ENCODE measurements at regions of chr7 and their contacts with region 1.

Region 1: DNA sequence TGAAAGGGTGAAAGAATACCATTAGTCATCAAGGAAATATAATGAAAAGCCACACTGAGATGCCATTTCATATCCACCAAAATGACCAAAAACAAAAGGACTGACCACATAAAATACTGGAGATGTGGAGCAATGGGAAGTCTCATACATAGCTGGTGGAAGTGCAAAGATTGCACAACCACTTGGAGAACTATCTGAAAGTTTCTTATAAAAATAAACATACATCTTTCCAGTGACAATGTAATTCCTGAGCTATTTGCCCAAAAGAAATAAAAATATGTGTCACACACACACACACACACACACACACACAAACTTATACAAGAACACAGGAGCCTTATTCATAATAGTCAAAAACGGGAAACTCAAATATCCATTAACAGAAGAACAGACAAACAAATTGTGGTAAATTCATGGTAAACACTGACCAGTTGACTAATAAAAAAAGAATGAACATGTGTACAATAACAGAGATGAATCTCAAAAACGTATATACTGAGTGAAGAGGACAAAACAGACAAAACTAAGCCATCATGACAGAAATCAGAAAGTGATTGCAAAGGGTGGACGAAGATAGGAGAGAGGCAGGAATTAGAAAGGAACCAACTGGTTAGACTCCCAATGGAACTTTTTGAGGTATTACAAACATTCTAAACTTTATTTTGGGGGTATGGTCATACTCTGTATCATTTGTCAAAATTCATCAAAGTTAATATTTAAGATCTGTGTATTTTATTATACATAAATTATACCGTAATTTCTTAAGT is 21.5 kb downstream of the WASL start:
- DNase-seq: peak; percentile 53
- ATAC-seq: peak; percentile 58
- H3K4me3 ChIP-seq: no peak overlapping the region
- H3K27ac ChIP-seq: peak overlapping the region; percentile 45
- H3K4me1 ChIP-seq: peaks cover 75% of the 10 kb centered on the region
- H3K27me3 ChIP-seq: no peaks in the 10 kb centered on the region
- CTCF ChIP-seq: no peak
- EP300 ChIP-seq: no peak; a peak in 1 of 4 replicates
- POLR2A ChIP-seq: no peak
- RAD21 ChIP-seq: no peak

Region 2: DNA sequence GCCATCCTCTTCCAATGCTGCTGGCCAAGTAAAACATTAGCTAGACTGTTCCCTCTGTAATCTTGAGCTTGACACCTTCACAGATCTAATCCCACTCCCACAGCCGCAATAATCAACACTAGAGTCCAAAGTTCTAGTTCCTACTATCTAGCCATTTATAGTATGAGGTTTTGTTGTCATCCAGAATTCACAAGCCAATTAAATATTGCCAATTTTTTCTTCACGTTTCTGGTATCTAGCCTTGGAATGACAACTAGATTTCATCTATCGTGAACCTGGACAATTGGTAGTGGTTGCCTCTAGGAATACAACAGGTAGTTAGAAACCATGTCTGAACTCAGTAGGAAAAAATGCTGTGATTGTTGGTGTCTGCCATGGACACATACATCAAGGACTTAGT is 11.1 kb after region 1 on chr7:
- CTCF ChIA-PET with region 1: no interaction called
- POLR2A ChIA-PET with region 1: no interaction called
- in situ Hi-C with region 1: no loop called
- intact Hi-C with region 1: loop called (anchors 2 kb)
- DNase-seq: peak; percentile 87
- ATAC-seq: peak; percentile 99
- H3K4me3 ChIP-seq: peak overlapping the region in 1 of 3 experiments; percentile 30; a peak in 1 of 6 replicates
- H3K27ac ChIP-seq: peak overlapping the region; percentile 49
- H3K4me1 ChIP-seq: peaks cover 88% of the 10 kb centered on the region
- H3K27me3 ChIP-seq: no peaks in the 10 kb centered on the region
- CTCF ChIP-seq: no peak
- EP300 ChIP-seq: peak in 1 of 2 experiments; percentile 71; a peak in 2 of 4 replicates
- POLR2A ChIP-seq: no peak
- RAD21 ChIP-seq: no peak

Region 3: DNA sequence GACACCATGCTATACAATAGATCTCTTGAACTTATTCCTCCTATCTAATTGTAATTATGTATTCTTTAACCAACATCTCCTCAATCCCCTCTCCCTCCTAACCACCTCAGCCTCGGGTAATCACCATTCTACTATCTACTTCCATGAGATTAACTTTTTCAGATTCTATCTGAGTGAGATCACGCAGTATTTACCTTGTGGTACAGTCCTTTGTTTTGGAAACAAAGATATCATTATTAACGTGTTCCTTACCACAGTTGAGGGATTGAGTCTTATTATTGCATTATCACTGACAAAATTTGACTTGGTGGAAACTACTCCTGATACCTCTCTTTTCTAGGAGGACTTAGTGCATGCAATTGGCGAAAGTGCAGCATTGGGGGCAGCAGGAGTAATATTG is 91.7 kb after region 1 on chr7:
- CTCF ChIA-PET with region 1: no interaction called
- POLR2A ChIA-PET with region 1: no interaction called
- in situ Hi-C with region 1: no loop called
- intact Hi-C with region 1: no loop called
- DNase-seq: no peak
- ATAC-seq: no peak
- H3K4me3 ChIP-seq: no peak overlapping the region
- H3K27ac ChIP-seq: no peak overlapping the region
- H3K4me1 ChIP-seq: no peaks in the 10 kb centered on the region
- H3K27me3 ChIP-seq: no peaks in the 10 kb centered on the region
- CTCF ChIP-seq: no peak
- EP300 ChIP-seq: no peak
- POLR2A ChIP-seq: no peak
- RAD21 ChIP-seq: no peak